Colonic mucosa (tissue), 4 donors: ENCODE measurements at regions of chr12 and their contacts with region 1.

Region 1: GRCh38 chr12:57983146-57983857 is 41.9 kb downstream of the ATP23 start:
- DNase-seq: peak; percentile 26
- H3K4me3 ChIP-seq: no peak overlapping the region
- H3K27ac ChIP-seq: no peak overlapping the region
- H3K4me1 ChIP-seq: no peaks in the 10 kb centered on the region
- H3K27me3 ChIP-seq: no peaks in the 10 kb centered on the region
- CTCF ChIP-seq: peak; percentile 57

Region 2: GRCh38 chr12:58302485-58303011 is 319.2 kb after region 1 on chr12:
- intact Hi-C with region 1: loop called (anchors 10 kb)
- DNase-seq: peak; percentile 51
- H3K4me3 ChIP-seq: no peak overlapping the region
- H3K27ac ChIP-seq: no peak overlapping the region
- H3K4me1 ChIP-seq: no peaks in the 10 kb centered on the region
- H3K27me3 ChIP-seq: no peaks in the 10 kb centered on the region
- CTCF ChIP-seq: no peak